ENCODE measurements at regions of chr12 and their contacts with region 1.

Region 1: GRCh38 chr12:10613349-10614055 is at the start of gene MAGOHB:
- DNase-seq: peak; percentile 97
- H3K4me3 Mint-ChIP-seq: peak within 1 kb of the TSS; percentile 97
- H3K27ac Mint-ChIP-seq: peak within 1 kb of the TSS; percentile 99
- H3K4me1 Mint-ChIP-seq: peaks cover 36% of the 10 kb centered on the region
- H3K27me3 Mint-ChIP-seq: peaks cover 16% of the 10 kb centered on the region
- total RNA-seq, gene MAGOHB: 79.4 and 85.1 TPM in 2 replicates

Region 2: GRCh38 chr12:10320643-10321042 is 292.9 kb before region 1 on chr12:
- intact Hi-C with region 1: loop called (anchors 5 kb)
- DNase-seq: no peak
- H3K4me3 Mint-ChIP-seq: no peak overlapping the region
- H3K27ac Mint-ChIP-seq: peak overlapping the region; percentile 26
- H3K4me1 Mint-ChIP-seq: peaks cover 23% of the 10 kb centered on the region
- H3K27me3 Mint-ChIP-seq: peaks cover 13% of the 10 kb centered on the region

Region 3: GRCh38 chr12:10673660-10674384 is 60.3 kb after region 1 on chr12 and contains the start of gene STYK1:
- intact Hi-C with region 1: loop called (anchors 1 kb)
- DNase-seq: peak; percentile 73
- H3K4me3 Mint-ChIP-seq: peak within 1 kb of the TSS; percentile 86
- H3K27ac Mint-ChIP-seq: peak within 1 kb of the TSS; percentile 72
- H3K4me1 Mint-ChIP-seq: peaks cover 74% of the 10 kb centered on the region
- H3K27me3 Mint-ChIP-seq: peaks cover 35% of the 10 kb centered on the region
- total RNA-seq, gene STYK1: 0.34 TPM in 1 of 2 replicates, not detected in the other

Region 4: DNA sequence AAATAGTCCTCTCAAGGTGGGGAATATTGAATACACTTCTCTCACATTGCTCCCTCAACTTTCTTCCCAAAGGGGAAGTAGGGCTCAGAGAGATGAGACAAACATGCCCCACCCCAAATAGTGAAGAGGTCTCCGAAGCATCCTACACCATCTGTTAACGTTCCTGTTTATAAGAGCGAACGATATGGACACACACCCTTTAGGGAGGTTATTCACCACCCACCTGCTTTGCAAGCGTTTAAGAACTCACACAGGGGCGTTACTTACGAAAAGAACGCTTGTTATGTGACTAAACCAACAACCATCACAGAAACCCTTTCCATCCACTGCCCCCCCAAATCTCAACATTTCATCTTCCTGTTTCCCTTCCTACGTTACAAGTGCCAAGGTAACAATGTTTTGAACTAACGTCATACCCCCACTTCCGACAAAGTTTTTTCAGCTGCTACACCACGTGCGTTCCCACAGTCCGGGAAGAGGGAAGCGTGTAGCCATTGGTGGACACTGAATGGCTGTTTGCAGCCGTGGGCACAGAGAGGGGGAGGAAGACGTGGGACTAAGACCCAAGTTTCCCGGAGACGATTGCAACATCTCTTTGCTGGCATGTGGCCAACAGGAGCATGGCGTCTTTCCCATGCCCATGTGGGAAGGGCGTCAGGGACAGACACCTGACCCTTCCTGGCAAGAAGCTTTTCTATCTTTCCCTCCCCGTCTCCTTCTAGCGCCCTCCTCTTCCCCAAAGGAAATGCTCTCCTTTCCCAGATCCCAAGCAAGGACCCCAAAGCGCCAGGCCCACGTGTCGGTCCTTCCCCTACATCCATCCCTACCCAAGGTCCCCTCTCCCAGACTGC is 108.4 kb after region 1 on chr12:
- intact Hi-C with region 1: loop called (anchors 1 kb)
- DNase-seq: peak; percentile 53
- H3K4me3 Mint-ChIP-seq: peak overlapping the region; percentile 96
- H3K27ac Mint-ChIP-seq: peak overlapping the region; percentile 96
- H3K4me1 Mint-ChIP-seq: peaks cover 60% of the 10 kb centered on the region
- H3K27me3 Mint-ChIP-seq: peaks cover 34% of the 10 kb centered on the region

Region 5: GRCh38 chr12:11085419-11085818 is 471.9 kb after region 1 on chr12:
- intact Hi-C with region 1: loop called (anchors 1 kb)
- DNase-seq: no peak
- H3K4me3 Mint-ChIP-seq: no peak overlapping the region
- H3K27ac Mint-ChIP-seq: peak overlapping the region; percentile 34
- H3K4me1 Mint-ChIP-seq: peaks cover 7% of the 10 kb centered on the region
- H3K27me3 Mint-ChIP-seq: no peaks in the 10 kb centered on the region